CD4-positive, alpha-beta T cell (primary cell): ENCODE measurements at regions of chr15 and their contacts with region 1.

Region 1: GRCh38 chr15:35606450-35606779 is 60.5 kb upstream of the DPH6 start:
- DNase-seq: no peak
- ATAC-seq: no peak
- H3K4me3 ChIP-seq: no peak overlapping the region
- H3K4me3 Mint-ChIP-seq: no peak overlapping the region
- H3K27ac ChIP-seq: no peak overlapping the region
- H3K27ac Mint-ChIP-seq: no peak overlapping the region
- H3K4me1 ChIP-seq: no peaks in the 10 kb centered on the region
- H3K4me1 Mint-ChIP-seq: no peaks in the 10 kb centered on the region
- H3K27me3 ChIP-seq: no peaks in the 10 kb centered on the region
- H3K27me3 Mint-ChIP-seq: no peaks in the 10 kb centered on the region
- CTCF ChIP-seq: no peak

Region 2: GRCh38 chr15:35229085-35229484 is 377.3 kb before region 1 on chr15:
- CTCF ChIA-PET with region 1: no interaction called
- POLR2A ChIA-PET with region 1: no interaction called
- intact Hi-C with region 1: loop called in 1 of 2 experiments (anchors 5 kb)
- DNase-seq: no peak
- ATAC-seq: no peak
- H3K4me3 ChIP-seq: no peak overlapping the region
- H3K4me3 Mint-ChIP-seq: no peak overlapping the region
- H3K27ac ChIP-seq: no peak overlapping the region
- H3K27ac Mint-ChIP-seq: no peak overlapping the region
- H3K4me1 ChIP-seq: no peaks in the 10 kb centered on the region
- H3K4me1 Mint-ChIP-seq: no peaks in the 10 kb centered on the region
- H3K27me3 ChIP-seq: no peaks in the 10 kb centered on the region
- H3K27me3 Mint-ChIP-seq: no peaks in the 10 kb centered on the region
- CTCF ChIP-seq: no peak

Region 3: DNA sequence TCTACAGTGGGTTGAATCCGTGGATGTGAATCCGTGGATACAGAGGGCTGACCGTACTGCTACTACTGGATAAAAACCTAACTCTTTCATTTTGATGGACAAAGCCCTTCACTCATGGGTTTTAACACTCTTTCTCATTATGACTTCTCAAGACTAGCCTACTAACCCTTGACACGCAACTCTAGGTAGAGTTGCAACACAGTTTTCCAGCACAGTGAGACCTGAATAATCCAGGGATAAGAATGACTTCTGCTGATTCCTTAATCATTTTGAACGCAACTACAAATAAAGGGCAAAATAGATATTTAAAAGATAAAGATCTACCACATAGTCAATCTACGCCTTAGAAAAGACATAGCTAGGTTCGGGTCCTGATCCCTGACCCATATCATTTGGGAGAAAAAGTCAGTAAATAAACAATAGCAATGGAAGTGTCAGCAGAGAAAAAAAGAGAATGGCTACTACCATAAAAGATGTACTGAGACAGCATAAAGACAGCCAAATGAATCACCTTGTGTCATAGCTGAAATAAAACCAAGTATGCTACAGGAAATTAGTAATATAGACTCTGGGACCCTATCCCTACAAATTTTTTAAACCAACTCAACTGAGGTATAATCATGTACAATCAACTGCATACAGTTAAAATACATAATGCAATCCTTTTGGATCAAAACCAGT is 148.1 kb before region 1 on chr15:
- CTCF ChIA-PET with region 1: no interaction called
- POLR2A ChIA-PET with region 1: no interaction called
- intact Hi-C with region 1: no loop called
- DNase-seq: no peak
- ATAC-seq: no peak
- H3K4me3 ChIP-seq: no peak overlapping the region
- H3K4me3 Mint-ChIP-seq: no peak overlapping the region
- H3K27ac ChIP-seq: no peak overlapping the region
- H3K27ac Mint-ChIP-seq: no peak overlapping the region
- H3K4me1 ChIP-seq: no peaks in the 10 kb centered on the region
- H3K4me1 Mint-ChIP-seq: no peaks in the 10 kb centered on the region
- H3K27me3 ChIP-seq: no peaks in the 10 kb centered on the region
- H3K27me3 Mint-ChIP-seq: no peaks in the 10 kb centered on the region
- CTCF ChIP-seq: no peak

Region 4: DNA sequence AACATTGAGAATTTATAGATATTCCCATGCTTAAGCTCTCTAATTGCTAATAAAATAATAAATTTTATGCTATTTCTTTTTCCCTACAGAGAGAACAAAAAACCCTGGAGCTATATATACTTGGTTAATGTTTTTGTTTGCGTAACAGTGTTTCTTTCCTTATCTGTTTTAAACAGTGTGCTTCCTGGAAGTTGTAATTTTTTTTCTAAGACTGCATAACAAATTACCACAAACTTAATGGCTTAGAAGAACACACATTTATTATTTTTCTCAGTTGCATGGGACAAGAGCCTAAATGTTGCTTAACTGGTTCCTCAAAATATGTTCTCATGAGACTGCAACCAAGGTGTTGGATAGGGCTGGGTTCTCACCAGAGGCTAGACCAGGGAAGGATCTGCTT is 10.8 kb before region 1 on chr15:
- CTCF ChIA-PET with region 1: no interaction called
- POLR2A ChIA-PET with region 1: no interaction called
- intact Hi-C with region 1: no loop called
- DNase-seq: no peak
- ATAC-seq: no peak
- H3K4me3 ChIP-seq: no peak overlapping the region
- H3K4me3 Mint-ChIP-seq: no peak overlapping the region
- H3K27ac ChIP-seq: no peak overlapping the region
- H3K27ac Mint-ChIP-seq: no peak overlapping the region
- H3K4me1 ChIP-seq: no peaks in the 10 kb centered on the region
- H3K4me1 Mint-ChIP-seq: no peaks in the 10 kb centered on the region
- H3K27me3 ChIP-seq: peaks cover 0 to 6% of the 10 kb centered on the region in 2 experiments
- H3K27me3 Mint-ChIP-seq: peaks cover 4% of the 10 kb centered on the region
- CTCF ChIP-seq: no peak

Region 5: GRCh38 chr15:35751413-35752133 is 145.2 kb after region 1 on chr15:
- CTCF ChIA-PET with region 1: no interaction called
- POLR2A ChIA-PET with region 1: no interaction called
- intact Hi-C with region 1: no loop called
- DNase-seq: peak in 12 of 14 experiments; percentile 1 to 54 (median 11)
- ATAC-seq: no peak
- H3K4me3 ChIP-seq: no peak overlapping the region
- H3K4me3 Mint-ChIP-seq: no peak overlapping the region
- H3K27ac ChIP-seq: no peak overlapping the region
- H3K27ac Mint-ChIP-seq: no peak overlapping the region
- H3K4me1 ChIP-seq: no peaks in the 10 kb centered on the region
- H3K4me1 Mint-ChIP-seq: no peaks in the 10 kb centered on the region
- H3K27me3 ChIP-seq: no peaks in the 10 kb centered on the region
- H3K27me3 Mint-ChIP-seq: peaks cover 22% of the 10 kb centered on the region
- CTCF ChIP-seq: peak; percentile 48